ENCODE measurements at regions of chr13 and their contacts with region 1.

Region 1: DNA sequence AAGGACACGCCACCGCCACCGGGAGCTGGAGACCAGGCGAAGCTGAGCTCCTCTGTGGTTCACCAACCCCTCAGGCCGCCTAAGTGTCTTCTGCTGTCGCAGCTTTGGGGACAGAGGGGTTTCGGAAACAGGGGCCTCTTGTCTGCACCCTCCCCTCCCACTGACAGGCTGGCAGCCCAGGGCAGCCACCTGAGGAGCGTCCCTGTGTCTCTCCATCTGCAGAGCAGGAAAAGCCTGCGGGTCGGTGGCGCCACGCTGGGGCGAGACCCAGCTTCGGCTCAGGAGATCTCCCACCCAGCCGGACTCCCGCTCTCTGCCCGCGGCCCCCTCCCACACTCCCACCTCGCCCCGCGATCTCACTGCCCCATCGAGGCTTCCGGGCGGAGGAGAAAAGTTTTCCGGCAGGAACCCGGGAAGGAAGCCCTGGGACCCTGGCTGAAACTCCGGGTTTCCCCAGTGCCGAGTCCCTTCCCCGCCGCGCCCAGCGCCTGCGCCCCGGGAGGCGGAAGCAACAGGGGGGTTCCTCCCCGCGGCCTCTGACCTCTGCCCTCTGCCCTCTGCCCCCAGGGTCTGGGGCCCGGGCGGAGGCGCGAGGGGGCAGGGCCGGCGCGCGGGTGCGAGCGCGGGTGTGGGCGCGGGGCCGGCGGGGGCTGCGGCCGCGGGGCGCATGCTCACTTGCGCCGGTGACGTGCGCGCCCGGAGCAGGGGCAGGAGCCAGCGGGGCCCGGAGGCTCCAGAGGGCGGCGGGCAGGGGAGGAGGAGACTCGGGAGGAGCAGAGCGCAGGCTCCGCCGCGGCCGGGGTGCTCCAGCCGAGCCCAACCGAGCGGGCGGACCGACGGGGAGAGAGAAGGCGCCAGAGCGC is at the start of gene ATP11A:
- DNase-seq: peak; percentile 90
- ATAC-seq: peak; percentile 84
- H3K4me3 Mint-ChIP-seq: peak within 1 kb of the TSS; percentile 84
- H3K27ac Mint-ChIP-seq: peak within 1 kb of the TSS; percentile 91
- H3K4me1 Mint-ChIP-seq: peaks cover 49% of the 10 kb centered on the region
- H3K27me3 Mint-ChIP-seq: no peaks in the 10 kb centered on the region
- total RNA-seq, gene ATP11A: 42.1 to 50.7 TPM

Region 2: GRCh38 chr13:112014857-112015256 is 674.7 kb before region 1 on chr13:
- CTCF ChIA-PET with region 1: no interaction called
- POLR2A ChIA-PET with region 1: no interaction called
- intact Hi-C with region 1: no loop called
- DNase-seq: no peak
- ATAC-seq: no peak
- H3K4me3 Mint-ChIP-seq: no peak overlapping the region
- H3K27ac Mint-ChIP-seq: no peak overlapping the region
- H3K4me1 Mint-ChIP-seq: no peaks in the 10 kb centered on the region
- H3K27me3 Mint-ChIP-seq: peaks cover 7% of the 10 kb centered on the region

Region 3: GRCh38 chr13:112638157-112638750 is 51.3 kb before region 1 on chr13:
- CTCF ChIA-PET with region 1: interaction called, 5 read pairs
- POLR2A ChIA-PET with region 1: no interaction called
- intact Hi-C with region 1: loop called (anchors 1 to 5 kb)
- DNase-seq: peak; percentile 22
- ATAC-seq: no peak
- H3K4me3 Mint-ChIP-seq: no peak overlapping the region
- H3K27ac Mint-ChIP-seq: no peak overlapping the region
- H3K4me1 Mint-ChIP-seq: peaks cover 12% of the 10 kb centered on the region
- H3K27me3 Mint-ChIP-seq: peaks cover 8% of the 10 kb centered on the region

Region 4: GRCh38 chr13:112674412-112675365 is 14.8 kb before region 1 on chr13:
- CTCF ChIA-PET with region 1: interaction called, 3 read pairs
- POLR2A ChIA-PET with region 1: no interaction called
- intact Hi-C with region 1: loop called (anchors 1 to 2 kb)
- DNase-seq: peak; percentile 22
- ATAC-seq: peak; percentile 86
- H3K4me3 Mint-ChIP-seq: no peak overlapping the region
- H3K27ac Mint-ChIP-seq: peak overlapping the region; percentile 39
- H3K4me1 Mint-ChIP-seq: peaks cover 26% of the 10 kb centered on the region
- H3K27me3 Mint-ChIP-seq: no peaks in the 10 kb centered on the region

Region 5: DNA sequence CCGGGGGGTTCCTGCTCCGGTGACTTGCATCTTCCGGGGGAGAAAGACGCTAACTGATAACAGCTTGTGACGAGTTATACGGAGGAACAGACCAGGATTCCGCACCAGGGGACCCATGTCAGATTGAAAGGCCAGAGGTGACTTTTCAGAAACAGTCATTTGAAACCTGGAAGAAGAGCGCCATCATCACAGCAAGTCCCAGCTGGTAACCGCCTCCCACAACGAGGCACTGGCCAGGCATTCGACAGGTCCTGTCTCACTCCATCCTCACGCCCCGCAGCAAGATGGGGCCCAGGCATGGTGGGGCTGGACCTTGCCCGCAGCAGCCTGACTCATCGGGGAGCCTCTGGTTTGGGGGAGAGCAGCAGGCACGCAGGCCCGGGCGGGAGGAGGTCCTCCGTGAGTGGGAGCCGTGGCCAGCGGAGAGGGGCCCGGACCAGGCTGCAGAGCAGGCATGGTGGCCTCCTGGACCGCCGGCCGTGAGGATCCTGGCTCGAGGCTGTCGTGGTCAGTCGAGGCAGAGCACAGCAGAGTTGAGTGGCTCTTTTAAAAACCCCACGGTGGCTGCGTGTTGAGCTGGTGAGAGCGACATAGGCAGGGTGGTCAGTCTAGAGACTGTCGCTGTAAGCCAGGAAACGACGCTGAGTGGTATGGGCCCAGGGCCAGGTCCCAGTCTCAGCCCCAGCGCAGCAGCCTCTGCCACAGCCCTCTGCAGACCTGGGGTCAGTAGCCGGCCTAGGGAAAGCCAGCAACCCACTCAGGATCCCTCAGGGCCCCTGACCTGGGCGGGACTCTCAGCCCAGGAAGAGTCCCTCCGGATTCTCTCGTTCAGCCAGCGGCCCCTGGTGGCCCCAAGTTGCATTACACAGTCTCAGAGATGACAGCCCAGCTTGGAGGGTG is 184.6 kb after region 1 on chr13:
- CTCF ChIA-PET with region 1: interaction called, 4 read pairs
- POLR2A ChIA-PET with region 1: no interaction called
- intact Hi-C with region 1: loop called in 1 of 2 experiments (anchors 2 kb)
- DNase-seq: peak; percentile 89
- ATAC-seq: peak; percentile 75
- H3K4me3 Mint-ChIP-seq: peak overlapping the region; percentile 46
- H3K27ac Mint-ChIP-seq: peak overlapping the region; percentile 91
- H3K4me1 Mint-ChIP-seq: peaks cover 16% of the 10 kb centered on the region
- H3K27me3 Mint-ChIP-seq: no peaks in the 10 kb centered on the region

Region 6: GRCh38 chr13:114132419-114133121 is 1443.0 kb after region 1 on chr13 and contains the start of gene RASA3:
- CTCF ChIA-PET with region 1: no interaction called
- POLR2A ChIA-PET with region 1: no interaction called
- intact Hi-C with region 1: loop called in 1 of 2 experiments (anchors 5 kb)
- DNase-seq: peak; percentile 74
- ATAC-seq: peak; percentile 35
- H3K4me3 Mint-ChIP-seq: peak within 1 kb of the TSS; percentile 100
- H3K27ac Mint-ChIP-seq: peak within 1 kb of the TSS; percentile 95
- H3K4me1 Mint-ChIP-seq: peaks cover 39% of the 10 kb centered on the region
- H3K27me3 Mint-ChIP-seq: no peaks in the 10 kb centered on the region
- total RNA-seq, gene RASA3: 33.0 to 34.7 TPM